ENCODE measurements at regions of chr1 and their contacts with region 1.

Region 1: DNA sequence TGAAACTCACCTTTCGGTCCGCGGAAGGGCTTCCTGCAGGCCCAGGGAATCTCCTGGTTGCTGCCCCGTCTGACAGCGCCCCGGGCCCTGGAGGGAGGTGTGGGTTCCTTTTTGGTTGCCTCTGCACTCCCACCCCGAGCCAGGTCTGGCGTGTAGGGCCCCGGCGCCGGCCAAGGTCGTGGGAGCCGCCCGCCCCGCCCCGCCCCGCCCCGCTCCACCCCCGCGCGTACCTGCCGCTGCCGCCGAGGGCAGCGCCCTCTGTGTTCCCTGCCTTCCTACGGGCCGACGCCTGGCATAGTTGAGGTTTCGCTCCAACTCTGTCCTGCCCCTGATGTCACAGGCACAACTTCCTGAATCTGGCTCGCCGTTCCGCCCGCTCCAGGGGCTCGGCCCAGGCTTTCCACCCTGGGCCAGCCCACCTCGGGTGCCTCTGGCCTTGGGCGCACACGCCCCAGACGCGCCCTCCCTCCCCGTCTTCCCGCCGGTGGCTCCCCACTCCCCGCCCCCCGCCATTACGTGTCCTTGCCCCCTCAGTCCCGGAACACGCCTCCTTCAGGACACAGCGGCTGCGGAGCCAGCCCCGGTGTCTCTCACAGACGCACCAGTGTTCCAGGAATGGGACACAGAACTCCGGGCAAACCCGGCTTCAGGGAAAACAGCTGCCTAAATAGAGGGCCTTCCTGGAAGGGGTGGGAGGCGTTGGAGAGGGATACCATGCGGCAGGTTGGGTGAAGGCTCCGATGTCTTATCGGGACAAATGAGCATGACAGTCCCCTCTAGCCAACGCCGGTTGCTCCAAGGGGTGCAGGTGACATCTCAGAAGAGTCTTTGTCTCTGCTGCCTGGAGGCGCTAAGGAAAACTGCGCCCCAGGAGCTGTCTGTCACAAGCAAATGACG is at the start of gene KIAA0040:
- DNase-seq: peak; percentile 85
- H3K4me3 Mint-ChIP-seq: peak within 1 kb of the TSS; percentile 99
- H3K27ac Mint-ChIP-seq: peak within 1 kb of the TSS; percentile 84
- H3K4me1 Mint-ChIP-seq: peaks cover 50% of the 10 kb centered on the region
- H3K27me3 Mint-ChIP-seq: no peaks in the 10 kb centered on the region
- total RNA-seq, gene KIAA0040: 32.6 and 35.4 TPM in 2 replicates

Region 2: GRCh38 chr1:175154629-175155472 is 38.0 kb before region 1 on chr1:
- intact Hi-C with region 1: loop called (anchors 1 kb)
- DNase-seq: peak; percentile 93
- H3K4me3 Mint-ChIP-seq: no peak overlapping the region
- H3K27ac Mint-ChIP-seq: no peak overlapping the region
- H3K4me1 Mint-ChIP-seq: peaks cover 30% of the 10 kb centered on the region
- H3K27me3 Mint-ChIP-seq: peaks cover 34% of the 10 kb centered on the region

Region 3: GRCh38 chr1:175176246-175176645 is 16.6 kb before region 1 on chr1:
- intact Hi-C with region 1: loop called (anchors 1 kb)
- DNase-seq: no peak
- H3K4me3 Mint-ChIP-seq: no peak overlapping the region
- H3K27ac Mint-ChIP-seq: no peak overlapping the region
- H3K4me1 Mint-ChIP-seq: peaks cover 55% of the 10 kb centered on the region
- H3K27me3 Mint-ChIP-seq: no peaks in the 10 kb centered on the region

Region 4: GRCh38 chr1:175237389-175237788 is 44.5 kb after region 1 on chr1:
- intact Hi-C with region 1: loop called (anchors 2 kb)
- DNase-seq: no peak
- H3K4me3 Mint-ChIP-seq: peak overlapping the region; percentile 62
- H3K27ac Mint-ChIP-seq: peak overlapping the region; percentile 63
- H3K4me1 Mint-ChIP-seq: peaks cover 33% of the 10 kb centered on the region
- H3K27me3 Mint-ChIP-seq: peaks cover 2% of the 10 kb centered on the region

Region 5: DNA sequence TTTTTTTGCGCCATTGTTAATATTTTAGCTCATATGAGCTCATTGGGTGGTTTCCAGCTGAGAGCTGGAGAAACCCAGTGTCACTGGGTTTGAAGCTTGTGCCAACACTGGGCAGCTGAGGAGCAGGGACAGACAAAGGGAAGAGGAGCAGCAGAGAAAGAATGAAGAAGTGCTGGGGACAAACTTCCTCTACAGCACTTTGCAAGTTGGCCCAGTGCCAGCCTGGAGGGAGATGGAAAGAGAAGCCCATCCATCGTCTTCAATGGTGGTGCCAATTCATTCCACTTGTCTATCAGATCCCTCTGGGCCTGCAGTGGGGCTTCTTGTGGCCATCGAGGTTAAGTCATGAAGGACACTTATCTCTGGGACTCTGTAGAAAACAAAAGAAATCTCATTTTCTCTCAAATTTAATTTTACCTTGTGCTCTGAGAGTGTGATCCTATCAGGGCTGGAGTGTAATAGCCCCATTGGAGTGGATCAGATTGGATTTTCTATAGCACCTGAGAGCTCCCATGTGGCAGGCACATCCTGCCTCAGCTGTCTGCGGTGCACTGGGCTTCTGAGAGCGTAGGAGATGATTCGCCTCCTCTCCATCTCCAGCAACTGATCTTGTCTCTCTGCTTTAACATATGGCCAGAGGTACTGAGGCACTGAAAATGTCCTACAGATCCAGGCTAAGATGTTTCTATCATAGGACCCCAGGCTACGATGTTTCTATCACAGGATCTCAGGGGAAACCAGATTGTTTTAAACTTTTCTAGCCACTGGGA is 435.9 kb after region 1 on chr1:
- intact Hi-C with region 1: no loop called
- DNase-seq: no peak
- H3K4me3 Mint-ChIP-seq: no peak overlapping the region
- H3K27ac Mint-ChIP-seq: no peak overlapping the region
- H3K4me1 Mint-ChIP-seq: no peaks in the 10 kb centered on the region
- H3K27me3 Mint-ChIP-seq: peaks cover 5% of the 10 kb centered on the region

Region 6: DNA sequence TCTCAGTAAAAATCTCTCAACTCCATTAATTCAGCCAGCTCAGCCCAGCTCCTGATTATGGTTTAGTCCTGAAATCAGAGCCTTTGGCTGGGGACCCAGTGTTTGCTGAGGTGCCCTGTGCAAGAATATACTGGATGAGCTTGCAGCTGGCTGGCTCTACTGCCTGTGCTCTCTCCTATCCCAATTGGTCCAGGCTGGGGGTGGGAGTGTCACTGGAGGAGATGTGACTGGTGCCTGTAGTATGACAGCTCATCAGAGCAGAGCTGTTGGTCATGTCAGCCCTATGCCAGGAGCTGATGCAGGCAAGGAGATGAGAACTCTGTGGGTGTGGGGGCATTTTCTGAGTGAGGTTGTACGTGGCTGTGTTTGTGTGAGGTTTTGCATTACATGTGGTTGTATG is 463.5 kb after region 1 on chr1:
- intact Hi-C with region 1: no loop called
- DNase-seq: no peak
- H3K4me3 Mint-ChIP-seq: no peak overlapping the region
- H3K27ac Mint-ChIP-seq: no peak overlapping the region
- H3K4me1 Mint-ChIP-seq: no peaks in the 10 kb centered on the region
- H3K27me3 Mint-ChIP-seq: peaks cover 3% of the 10 kb centered on the region